ENCODE measurements at regions of chr1 and their contacts with region 1.

Region 1: GRCh38 chr1:22052115-22053016 is at the start of gene CDC42:
- DNase-seq: peak; percentile 96
- H3K4me3 Mint-ChIP-seq: peak within 1 kb of the TSS; percentile 99
- H3K27ac Mint-ChIP-seq: peak within 1 kb of the TSS; percentile 99
- H3K4me1 Mint-ChIP-seq: peaks cover 60% of the 10 kb centered on the region
- H3K27me3 Mint-ChIP-seq: peaks cover 2% of the 10 kb centered on the region
- total RNA-seq, gene CDC42: 293 and 318 TPM in 2 replicates

Region 2: DNA sequence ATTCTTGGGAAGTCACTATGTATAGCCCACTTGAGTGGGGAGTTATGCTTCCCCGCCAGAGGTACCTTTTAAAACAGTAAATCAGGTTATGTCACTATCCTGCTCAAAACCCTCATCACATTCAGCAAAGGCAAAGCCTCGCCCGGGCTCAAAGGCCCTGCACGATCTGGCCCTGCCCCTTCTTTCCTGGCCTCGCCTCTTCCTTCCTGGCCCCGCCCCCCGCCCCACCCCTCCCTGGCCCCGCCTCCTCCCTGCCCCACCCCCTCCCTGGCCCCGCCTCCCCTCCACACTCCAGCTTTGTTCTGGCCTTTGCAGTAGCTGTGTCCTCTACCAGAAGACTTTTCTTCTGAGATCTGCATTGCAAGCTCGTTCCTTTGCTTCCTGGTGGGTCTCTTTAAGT is 233.7 kb before region 1 on chr1:
- intact Hi-C with region 1: no loop called
- DNase-seq: peak; percentile 17
- H3K4me3 Mint-ChIP-seq: no peak overlapping the region
- H3K27ac Mint-ChIP-seq: no peak overlapping the region
- H3K4me1 Mint-ChIP-seq: peaks cover 11% of the 10 kb centered on the region
- H3K27me3 Mint-ChIP-seq: peaks cover 12% of the 10 kb centered on the region

Region 3: GRCh38 chr1:21869620-21870121 is 182.7 kb before region 1 on chr1:
- intact Hi-C with region 1: no loop called
- DNase-seq: no peak
- H3K4me3 Mint-ChIP-seq: no peak overlapping the region
- H3K27ac Mint-ChIP-seq: no peak overlapping the region
- H3K4me1 Mint-ChIP-seq: no peaks in the 10 kb centered on the region
- H3K27me3 Mint-ChIP-seq: no peaks in the 10 kb centered on the region

Region 4: DNA sequence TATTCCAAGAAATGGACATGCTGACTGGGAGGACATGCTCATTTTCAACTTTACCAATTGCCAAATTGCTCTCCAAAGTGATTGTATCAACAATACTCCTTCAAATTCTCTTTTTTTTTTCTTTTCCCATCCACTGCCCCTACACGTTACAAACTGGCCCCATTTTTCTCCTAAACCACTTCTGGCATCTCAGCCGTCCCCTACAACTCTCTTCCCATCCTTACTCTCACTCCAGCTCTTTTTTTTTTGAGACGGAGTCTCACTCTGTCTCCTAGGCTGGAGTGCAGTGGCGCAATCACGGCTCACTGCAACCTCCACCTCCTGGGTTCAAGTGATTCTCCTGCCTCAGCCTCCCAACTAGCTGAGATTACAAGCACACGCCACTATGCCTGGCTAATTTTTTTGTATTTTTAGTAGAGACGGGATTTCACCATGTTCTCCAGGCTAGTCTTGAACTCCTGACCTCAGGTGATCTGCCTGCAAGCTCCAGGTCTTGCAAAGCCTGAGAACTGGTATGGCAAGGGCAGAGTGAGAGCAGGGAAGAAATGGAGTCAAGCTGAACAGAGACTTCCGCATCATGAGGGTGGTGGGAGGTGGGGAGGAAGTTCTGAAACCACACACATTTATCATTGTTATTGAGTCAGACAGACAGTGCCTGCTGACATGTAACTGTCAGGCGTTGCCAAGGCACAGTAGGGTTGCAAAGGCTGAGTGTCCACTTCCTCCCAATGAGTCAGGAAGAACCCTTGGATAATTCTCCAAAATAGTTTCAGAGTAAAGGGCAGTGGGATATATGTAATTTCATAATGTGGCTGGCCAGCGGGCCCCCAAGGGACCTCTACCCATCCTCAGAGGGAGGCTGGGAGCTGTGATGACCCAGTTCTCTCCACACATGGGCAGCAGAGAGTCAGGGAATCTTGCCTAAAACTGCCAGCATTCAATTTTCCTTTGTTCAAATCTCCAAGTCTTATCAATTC is 33.5 kb before region 1 on chr1:
- intact Hi-C with region 1: loop called (anchors 1 kb)
- DNase-seq: peak; percentile 70
- H3K4me3 Mint-ChIP-seq: peak overlapping the region; percentile 32
- H3K27ac Mint-ChIP-seq: peak overlapping the region; percentile 96
- H3K4me1 Mint-ChIP-seq: peaks cover 22% of the 10 kb centered on the region
- H3K27me3 Mint-ChIP-seq: peaks cover 3% of the 10 kb centered on the region

Region 5: GRCh38 chr1:22025368-22026155 is 26.8 kb before region 1 on chr1:
- intact Hi-C with region 1: loop called (anchors 1 kb)
- DNase-seq: peak; percentile 90
- H3K4me3 Mint-ChIP-seq: peak overlapping the region; percentile 99
- H3K27ac Mint-ChIP-seq: peak overlapping the region; percentile 100
- H3K4me1 Mint-ChIP-seq: peaks cover 55% of the 10 kb centered on the region
- H3K27me3 Mint-ChIP-seq: no peaks in the 10 kb centered on the region

Region 6: DNA sequence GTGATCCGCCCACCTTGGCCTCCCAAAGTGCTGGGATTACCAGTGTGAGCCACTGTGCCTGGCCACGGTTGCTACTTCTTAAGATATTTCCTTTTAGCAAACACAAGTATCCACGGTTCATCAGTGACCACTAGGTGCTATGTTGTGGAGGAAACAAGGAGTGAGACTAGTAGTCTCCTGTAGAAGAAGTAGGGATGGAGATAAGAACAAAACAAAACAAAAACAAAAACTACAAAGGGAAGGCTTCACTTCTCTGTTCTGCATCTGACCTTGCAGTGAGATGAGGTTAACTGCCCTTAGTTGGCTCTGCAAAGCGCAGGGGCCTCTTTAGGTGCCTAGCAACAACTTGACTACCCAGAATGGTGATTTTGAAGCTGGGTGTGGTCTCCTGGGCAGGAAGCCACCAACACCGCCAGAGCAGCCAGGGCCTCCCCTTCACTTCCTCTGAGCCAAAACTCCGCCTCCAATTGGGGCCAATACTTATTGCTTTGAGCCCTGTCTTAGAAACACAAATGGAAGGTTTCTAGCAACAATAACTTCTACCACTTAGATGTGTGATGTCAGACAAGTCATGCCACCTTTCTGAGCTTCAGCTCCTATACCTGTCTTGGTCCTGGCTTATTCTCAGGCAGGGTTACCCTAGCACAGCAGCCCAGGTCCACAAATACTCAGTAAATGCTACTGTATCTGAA is 12.6 kb before region 1 on chr1:
- intact Hi-C with region 1: loop called (anchors 1 kb)
- DNase-seq: peak; percentile 92
- H3K4me3 Mint-ChIP-seq: peak overlapping the region; percentile 62
- H3K27ac Mint-ChIP-seq: peak overlapping the region; percentile 96
- H3K4me1 Mint-ChIP-seq: peaks cover 50% of the 10 kb centered on the region
- H3K27me3 Mint-ChIP-seq: no peaks in the 10 kb centered on the region

Region 7: DNA sequence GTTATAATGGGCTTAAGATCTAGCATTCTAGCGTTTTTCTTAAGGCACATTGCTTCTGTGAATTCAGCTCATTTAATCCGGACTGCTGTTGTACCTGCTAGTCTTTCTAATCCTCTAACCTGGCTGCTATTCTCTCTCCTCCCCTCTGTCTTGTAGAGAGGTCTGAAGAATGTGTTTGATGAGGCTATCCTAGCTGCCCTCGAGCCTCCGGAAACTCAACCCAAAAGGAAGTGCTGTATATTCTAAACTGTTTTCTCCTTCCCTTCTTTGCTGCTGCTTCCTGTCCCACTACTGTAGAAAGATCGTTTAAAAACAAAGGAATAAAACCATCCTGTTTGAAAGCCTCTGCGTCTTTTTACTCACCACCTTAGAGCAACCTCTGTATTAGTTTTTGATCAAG is 37.4 kb after region 1 on chr1:
- intact Hi-C with region 1: loop called (anchors 1 kb)
- DNase-seq: peak; percentile 11
- H3K4me3 Mint-ChIP-seq: peak overlapping the region; percentile 50
- H3K27ac Mint-ChIP-seq: peak overlapping the region; percentile 80
- H3K4me1 Mint-ChIP-seq: peaks cover 83% of the 10 kb centered on the region
- H3K27me3 Mint-ChIP-seq: no peaks in the 10 kb centered on the region

Region 8: DNA sequence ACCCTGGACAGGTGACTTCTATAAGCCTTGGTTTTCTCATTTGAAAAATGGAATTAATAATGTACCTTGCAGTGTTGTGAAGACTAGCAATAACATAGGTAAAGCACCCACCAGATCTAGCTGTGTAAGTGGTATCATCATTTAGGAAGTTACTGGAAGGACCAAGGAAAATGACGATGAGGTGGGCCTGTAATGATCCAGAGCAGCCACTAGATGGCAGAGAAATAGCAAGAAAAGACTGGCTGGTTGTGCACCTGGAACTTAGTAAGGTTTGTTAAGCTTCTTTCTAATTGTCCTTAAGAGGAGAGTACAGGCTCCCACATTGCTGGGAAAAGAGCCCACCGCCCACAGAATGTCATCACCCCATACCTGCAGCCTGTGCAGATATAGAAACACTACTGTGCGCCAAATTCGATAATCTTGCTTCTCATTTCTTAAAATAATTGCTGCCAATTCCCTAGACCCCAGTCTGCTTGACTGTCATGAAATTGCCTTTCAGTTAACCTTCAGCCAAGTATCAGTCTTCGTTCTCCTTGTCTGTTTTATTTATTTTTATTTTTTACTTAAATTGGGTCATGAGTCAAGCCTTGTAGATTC is 53.3 kb after region 1 on chr1:
- intact Hi-C with region 1: loop called (anchors 1 kb)
- DNase-seq: no peak
- H3K4me3 Mint-ChIP-seq: no peak overlapping the region
- H3K27ac Mint-ChIP-seq: peak overlapping the region; percentile 89
- H3K4me1 Mint-ChIP-seq: peaks cover 50% of the 10 kb centered on the region
- H3K27me3 Mint-ChIP-seq: no peaks in the 10 kb centered on the region

Region 9: GRCh38 chr1:22451702-22452474 is 399.5 kb after region 1 on chr1 and contains the start of gene ZBTB40:
- intact Hi-C with region 1: loop called (anchors 5 kb)
- DNase-seq: peak; percentile 92
- H3K4me3 Mint-ChIP-seq: peak within 1 kb of the TSS; percentile 96
- H3K27ac Mint-ChIP-seq: peak within 1 kb of the TSS; percentile 95
- H3K4me1 Mint-ChIP-seq: peaks cover 23% of the 10 kb centered on the region
- H3K27me3 Mint-ChIP-seq: peaks cover 2% of the 10 kb centered on the region
- total RNA-seq, gene ZBTB40: 19.5 and 20.0 TPM in 2 replicates

Measured in activated T-helper 1 cell treated with anti-CD3 and anti-CD28 coated beads, Interleukin-12 subunit alpha, Interleukin-12 subunit beta, Interleukin-2, Interleukin-4 antibody, amounts not matched to agents 30 ng/mL and 10 ng/mL and 1 ng/mL, durations not matched to agents 14 hours and 24 hours and 36 hours (primary cell).